Heart left ventricle (tissue), 16 donors: ENCODE measurements at regions of chr11 and their contacts with region 1.

Region 1: DNA sequence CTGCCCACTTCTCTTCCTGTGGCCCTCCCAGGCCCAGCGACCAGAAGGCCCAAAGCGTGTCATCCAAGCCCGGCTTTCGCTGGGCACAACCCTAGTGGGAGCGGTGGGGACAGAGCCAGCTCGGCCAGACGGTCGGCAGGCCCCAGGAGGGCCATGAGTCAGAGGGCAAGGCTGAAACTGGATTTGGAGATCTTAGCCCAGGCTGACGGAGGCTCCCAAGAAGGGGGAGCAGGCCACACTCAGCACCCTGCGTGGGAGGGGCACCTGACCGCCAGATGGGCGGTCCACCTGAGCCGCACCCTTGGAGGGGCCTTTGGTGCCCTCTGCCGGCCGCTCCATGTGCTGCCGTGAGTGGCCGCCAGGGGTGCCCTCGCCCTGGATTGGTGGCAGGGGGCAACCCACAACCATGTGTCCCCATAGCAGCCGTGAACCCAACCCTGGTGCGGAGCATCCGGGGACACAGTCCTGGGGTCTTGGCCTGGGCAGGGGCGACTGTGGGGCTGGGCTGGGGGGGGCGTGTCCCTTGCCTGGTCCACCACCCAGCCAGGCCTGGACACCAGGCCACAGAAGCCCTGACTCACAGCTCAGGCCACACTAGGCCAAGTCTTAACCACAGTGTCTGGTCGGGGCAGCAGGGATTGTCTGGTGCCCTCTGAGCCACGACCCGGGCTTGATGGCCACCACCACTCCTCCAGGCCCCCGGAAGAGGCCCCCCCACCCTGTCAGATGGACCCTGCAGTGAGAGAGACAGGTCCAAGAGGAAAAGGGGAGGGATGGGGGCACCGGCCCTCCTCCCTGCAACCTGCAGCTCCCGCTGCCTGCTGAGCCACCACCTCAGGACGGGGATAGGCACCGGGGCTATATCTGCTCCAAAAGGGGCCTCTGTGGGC is 19.2 kb upstream of the TALDO1 start:
- DNase-seq: peak; percentile 68 to 88 (median 85)
- ATAC-seq: peak; percentile 69 to 92 (median 86)
- H3K4me3 ChIP-seq: no peak overlapping the region
- H3K27ac ChIP-seq: peak overlapping the region in 1 of 12 donors; percentile 1
- H3K4me1 ChIP-seq: peaks cover 0 to 30% (median 22%) of the 10 kb centered on the region in 12 donors
- H3K27me3 ChIP-seq: peaks cover 18 to 60% (median 29%) of the 10 kb centered on the region in 9 donors
- CTCF ChIP-seq: peak; percentile 90 to 99 (median 94)
- POLR2A ChIP-seq: no peak

Region 2: GRCh38 chr11:554824-555472 is 173.2 kb before region 1 on chr11:
- intact Hi-C with region 1: loop called (anchors 1 to 5 kb)
- DNase-seq: peak in 3 of 5 donors; percentile 49 to 59 (median 55)
- ATAC-seq: peak in 3 of 4 donors; percentile 29 to 69 (median 56)
- H3K4me3 ChIP-seq: peak overlapping the region in 9 of 12 donors; percentile 10 to 50 (median 30)
- H3K27ac ChIP-seq: no peak overlapping the region
- H3K4me1 ChIP-seq: peaks cover 0 to 24% (median 13%) of the 10 kb centered on the region in 12 donors
- H3K27me3 ChIP-seq: peaks cover 27 to 88% (median 58%) of the 10 kb centered on the region in 9 donors
- CTCF ChIP-seq: peak; percentile 38 to 66 (median 54)
- POLR2A ChIP-seq: no peak

Region 3: DNA sequence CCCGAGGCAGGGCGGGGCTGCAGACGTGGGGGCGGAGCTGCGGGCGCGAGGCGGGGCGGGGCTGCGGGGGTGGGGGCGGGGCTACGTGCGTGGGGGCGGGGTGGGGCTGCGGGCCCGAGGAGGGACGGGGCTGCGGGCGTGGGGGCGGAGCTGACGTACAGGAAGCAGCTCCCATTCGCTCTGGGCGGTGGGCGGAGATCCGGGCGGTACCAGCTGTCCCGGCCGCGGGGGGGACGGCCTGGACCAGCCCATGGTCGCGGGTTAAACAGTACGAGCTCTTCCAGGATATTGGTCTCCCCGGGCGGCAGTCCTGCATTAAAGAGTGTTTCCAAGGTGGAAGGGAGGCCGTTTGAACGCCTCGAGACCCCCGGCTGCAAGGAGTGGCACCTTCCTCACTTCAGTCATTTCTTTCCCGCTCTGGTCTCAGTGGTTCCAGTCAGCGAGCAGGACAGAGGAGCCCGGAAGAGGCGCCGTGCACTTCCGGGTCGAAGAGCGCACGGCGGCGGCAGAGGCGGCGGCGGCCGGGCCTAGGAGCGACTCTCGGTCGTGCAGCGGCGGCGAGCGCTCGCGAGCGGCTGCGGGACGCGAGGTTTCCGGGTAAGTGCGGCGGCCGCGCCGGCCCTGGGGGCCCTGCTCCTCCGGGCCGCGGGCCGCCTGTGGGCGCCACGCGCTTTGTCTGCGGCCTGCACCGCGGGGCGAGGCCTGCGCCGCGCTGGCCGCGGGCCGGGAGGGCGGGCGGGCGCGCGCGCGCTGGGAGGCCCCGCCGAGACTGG is 151.9 kb before region 1 on chr11 and contains the start of gene PHRF1:
- intact Hi-C with region 1: no loop called
- DNase-seq: peak; percentile 97 to 98 (median 97)
- ATAC-seq: peak; percentile 91 to 99 (median 94)
- H3K4me3 ChIP-seq: peak within 1 kb of the TSS; percentile 74 to 99 (median 84)
- H3K27ac ChIP-seq: peak within 1 kb of the TSS; percentile 88 to 98 (median 96)
- H3K4me1 ChIP-seq: peaks cover 20 to 57% (median 50%) of the 10 kb centered on the region in 12 donors
- H3K27me3 ChIP-seq: peaks cover 0 to 6% (median 0%) of the 10 kb centered on the region in 9 donors
- CTCF ChIP-seq: no peak
- POLR2A ChIP-seq: peak in 1 of 2 donors; percentile 70
- total RNA-seq, gene PHRF1: 11.6 to 21.3 (median 18.3) TPM

Region 4: GRCh38 chr11:662689-663274 is 65.3 kb before region 1 on chr11:
- intact Hi-C with region 1: loop called (anchors 1 to 10 kb)
- DNase-seq: peak; percentile 51 to 80 (median 63)
- ATAC-seq: peak in 3 of 4 donors; percentile 68 to 78 (median 74)
- H3K4me3 ChIP-seq: no peak overlapping the region
- H3K27ac ChIP-seq: no peak overlapping the region
- H3K4me1 ChIP-seq: peaks cover 0 to 10% (median 2%) of the 10 kb centered on the region in 12 donors
- H3K27me3 ChIP-seq: no peaks in the 10 kb centered on the region
- CTCF ChIP-seq: peak; percentile 52 to 80 (median 68)
- POLR2A ChIP-seq: no peak

Region 5: DNA sequence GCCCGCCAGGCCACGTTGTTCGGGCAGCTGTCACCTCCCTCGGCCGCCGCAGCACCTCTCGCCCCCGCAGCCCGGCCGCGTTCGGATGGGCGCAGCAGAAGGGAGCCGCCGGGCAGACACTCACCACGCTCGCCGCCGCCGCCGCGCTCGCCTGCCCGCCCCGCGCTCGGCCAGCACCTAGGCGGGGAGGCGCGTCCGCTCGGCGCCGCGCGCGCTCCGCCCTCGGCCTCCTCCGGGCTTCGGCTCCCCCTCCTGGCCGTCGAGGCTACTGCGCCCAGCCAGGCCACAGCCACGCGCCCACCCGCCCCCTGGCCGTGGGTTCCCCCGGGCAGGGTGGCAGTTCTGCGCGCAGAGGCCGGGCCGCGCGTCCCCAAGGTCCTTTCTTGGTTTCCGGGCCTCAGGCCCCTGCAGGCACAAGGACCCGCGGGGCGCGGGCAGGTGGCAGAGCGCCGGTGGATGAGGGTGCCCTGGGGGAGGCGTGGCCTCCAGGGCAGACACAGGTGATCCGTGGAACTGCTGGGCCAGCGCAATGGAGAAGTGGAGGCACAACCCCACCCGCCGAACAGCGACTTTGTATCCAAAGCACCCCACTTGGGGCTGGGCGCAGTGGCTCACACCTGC is 70.1 kb after region 1 on chr11 and contains the start of gene SLC25A22:
- intact Hi-C with region 1: loop called in 1 of 10 experiments (anchors 10 kb)
- DNase-seq: peak; percentile 74 to 90 (median 80)
- ATAC-seq: peak; percentile 21 to 77 (median 56)
- H3K4me3 ChIP-seq: peak within 1 kb of the TSS; percentile 50 to 89 (median 78)
- H3K27ac ChIP-seq: peak within 1 kb of the TSS; percentile 37 to 88 (median 84)
- H3K4me1 ChIP-seq: peaks cover 6 to 40% (median 24%) of the 10 kb centered on the region in 12 donors
- H3K27me3 ChIP-seq: no peaks in the 10 kb centered on the region
- CTCF ChIP-seq: peak; percentile 61 to 96 (median 81)
- POLR2A ChIP-seq: peak in 1 of 2 donors; percentile 15
- total RNA-seq, gene SLC25A22: 2.1 to 12.8 (median 4.4) TPM